Naive thymus-derived CD4-positive, alpha-beta T cell (primary cell): ENCODE measurements at regions of chr15 and their contacts with region 1.

Region 1: GRCh38 chr15:33201491-33202231 is 7.1 kb upstream of the FMN1 start:
- DNase-seq: peak in 8 of 9 donors; percentile 3 to 67 (median 19)
- ATAC-seq: peak; percentile 88
- H3K4me3 ChIP-seq: peak overlapping the region; percentile 43
- H3K4me3 Mint-ChIP-seq: peak overlapping the region; percentile 34 to 79 (median 74)
- H3K27ac ChIP-seq: peak overlapping the region; percentile 36
- H3K27ac Mint-ChIP-seq: peak overlapping the region; percentile 5 to 89 (median 74)
- H3K4me1 ChIP-seq: peaks cover 0 to 4% of the 10 kb centered on the region in 2 donors
- H3K4me1 Mint-ChIP-seq: peaks cover 0 to 30% (median 14%) of the 10 kb centered on the region in 7 donors
- H3K27me3 ChIP-seq: no peaks in the 10 kb centered on the region
- H3K27me3 Mint-ChIP-seq: peaks cover 0 to 12% (median 0%) of the 10 kb centered on the region in 5 donors

Region 2: GRCh38 chr15:33215941-33216872 is 14.5 kb after region 1 on chr15:
- CTCF ChIA-PET with region 1: no interaction called
- POLR2A ChIA-PET with region 1: no interaction called
- intact Hi-C with region 1: loop called in 1 of 2 experiments (anchors 1 kb)
- DNase-seq: peak in 4 of 9 donors; percentile 19 to 35 (median 27)
- ATAC-seq: peak; percentile 71
- H3K4me3 ChIP-seq: no peak overlapping the region
- H3K4me3 Mint-ChIP-seq: no peak overlapping the region
- H3K27ac ChIP-seq: no peak overlapping the region
- H3K27ac Mint-ChIP-seq: no peak overlapping the region
- H3K4me1 ChIP-seq: no peaks in the 10 kb centered on the region
- H3K4me1 Mint-ChIP-seq: peaks cover 0 to under 1% (median 0%) of the 10 kb centered on the region in 7 donors
- H3K27me3 ChIP-seq: no peaks in the 10 kb centered on the region
- H3K27me3 Mint-ChIP-seq: no peaks in the 10 kb centered on the region